ENCODE measurements at regions of chr7 and their contacts with region 1.

Region 1: GRCh38 chr7:38222481-38223096 is 44.5 kb downstream of the STARD3NL start:
- DNase-seq: peak; percentile 64
- H3K4me3 ChIP-seq: no peak overlapping the region
- H3K27ac ChIP-seq: no peak overlapping the region
- H3K4me1 ChIP-seq: no peaks in the 10 kb centered on the region
- H3K27me3 ChIP-seq: no peaks in the 10 kb centered on the region

Region 2: DNA sequence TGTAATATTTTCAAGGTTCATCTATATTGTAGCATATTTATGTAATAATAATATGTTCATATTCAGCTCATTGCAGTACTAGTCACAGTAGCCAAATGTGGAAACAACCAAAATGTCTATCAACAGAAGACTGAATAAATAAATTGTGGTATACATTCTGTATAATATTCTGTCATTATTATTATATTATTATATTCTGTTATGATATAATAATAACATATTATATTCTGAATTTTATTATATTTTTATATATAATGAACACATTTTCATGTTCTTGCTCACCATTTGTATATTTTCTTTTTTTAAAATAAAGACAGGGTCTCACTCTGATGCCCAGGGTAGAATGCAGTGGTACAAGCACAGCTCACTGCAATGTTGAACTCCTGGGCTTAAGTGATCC is 135.7 kb before region 1 on chr7:
- in situ Hi-C with region 1: no loop called
- DNase-seq: no peak
- H3K4me3 ChIP-seq: no peak overlapping the region
- H3K27ac ChIP-seq: no peak overlapping the region
- H3K4me1 ChIP-seq: no peaks in the 10 kb centered on the region
- H3K27me3 ChIP-seq: no peaks in the 10 kb centered on the region

Region 3: GRCh38 chr7:38107486-38107893 is 115.1 kb before region 1 on chr7:
- in situ Hi-C with region 1: loop called (anchors 5 kb)
- DNase-seq: peak; percentile 58
- H3K4me3 ChIP-seq: no peak overlapping the region
- H3K27ac ChIP-seq: no peak overlapping the region
- H3K4me1 ChIP-seq: no peaks in the 10 kb centered on the region
- H3K27me3 ChIP-seq: peaks cover 36% of the 10 kb centered on the region; the same call in 1 of the 2 replicates

Measured in GM23248 (cell line).